Esophagus muscularis mucosa (tissue), 4 donors: ENCODE measurements at regions of chr12 and their contacts with region 1.

Region 1: DNA sequence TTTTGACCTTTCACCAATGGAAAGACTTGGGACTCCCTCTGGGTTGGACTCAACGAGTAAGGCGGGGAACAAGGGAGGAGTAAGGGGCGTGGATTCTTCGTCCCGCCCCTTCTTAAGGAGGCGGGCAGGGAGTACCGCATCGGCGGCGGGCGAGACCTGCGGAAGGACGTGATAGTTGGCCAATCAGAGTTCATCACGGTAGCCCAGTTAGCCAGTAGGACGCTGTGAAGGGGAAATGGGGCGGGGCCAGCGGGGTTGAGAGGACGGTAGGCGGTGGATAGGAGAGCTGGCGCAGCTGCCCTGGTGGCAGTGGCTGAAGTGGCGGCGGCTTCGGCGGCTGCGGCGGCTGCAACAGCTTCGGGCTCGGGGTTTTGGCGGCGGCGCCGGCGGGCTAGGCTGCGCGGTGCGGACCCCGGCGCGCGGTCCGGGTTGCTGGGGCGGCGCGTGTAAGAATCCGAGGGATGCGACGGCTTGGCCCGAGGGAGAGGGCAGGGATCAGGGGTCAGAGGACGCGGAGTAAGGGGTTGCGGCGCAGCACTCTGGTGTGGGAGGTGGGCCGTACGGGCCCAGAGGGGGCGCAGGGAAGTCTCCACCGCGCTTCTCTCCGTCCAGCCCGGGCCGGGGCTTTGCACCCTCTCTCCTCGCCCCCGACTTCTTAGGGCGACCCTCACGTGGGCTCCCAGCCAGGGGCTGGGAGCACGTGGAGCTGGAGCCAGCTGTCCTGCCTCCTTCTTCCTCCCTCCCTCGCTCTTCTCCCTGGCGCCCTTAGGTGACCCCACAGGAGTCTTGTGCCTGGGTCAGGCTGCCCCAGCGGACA is at the start of gene TPCN1:
- DNase-seq: peak; percentile 100
- H3K4me3 ChIP-seq: peak within 1 kb of the TSS; percentile 71 to 86 (median 79)
- H3K27ac ChIP-seq: peak within 1 kb of the TSS; percentile 88 to 92 (median 90)
- H3K4me1 ChIP-seq: peaks cover 29 to 53% (median 38%) of the 10 kb centered on the region in 4 donors
- H3K27me3 ChIP-seq: no peaks in the 10 kb centered on the region
- CTCF ChIP-seq: peak in 1 of 3 experiments; percentile 17
- EP300 ChIP-seq: no peak
- POLR2A ChIP-seq: peak; percentile 98
- total RNA-seq, gene TPCN1: 31.1 to 54.0 (median 34.5) TPM

Region 2: GRCh38 chr12:113185774-113186365 is 35.5 kb before region 1 on chr12:
- intact Hi-C with region 1: loop called (anchors 2 kb)
- DNase-seq: no peak
- H3K4me3 ChIP-seq: peak overlapping the region; percentile 67 to 98 (median 92)
- H3K27ac ChIP-seq: peak overlapping the region; percentile 91 to 98 (median 95)
- H3K4me1 ChIP-seq: peaks cover 23 to 41% (median 36%) of the 10 kb centered on the region in 4 donors
- H3K27me3 ChIP-seq: no peaks in the 10 kb centered on the region
- CTCF ChIP-seq: no peak
- EP300 ChIP-seq: no peak
- POLR2A ChIP-seq: no peak

Region 3: GRCh38 chr12:113348849-113349536 is 127.6 kb after region 1 on chr12:
- intact Hi-C with region 1: no loop called
- DNase-seq: no peak
- H3K4me3 ChIP-seq: no peak overlapping the region
- H3K27ac ChIP-seq: no peak overlapping the region
- H3K4me1 ChIP-seq: no peaks in the 10 kb centered on the region
- H3K27me3 ChIP-seq: peaks cover 0 to 20% (median 0%) of the 10 kb centered on the region in 4 donors
- CTCF ChIP-seq: no peak
- EP300 ChIP-seq: no peak
- POLR2A ChIP-seq: no peak